ENCODE measurements at regions of chr16 and their contacts with region 1.

Region 1: DNA sequence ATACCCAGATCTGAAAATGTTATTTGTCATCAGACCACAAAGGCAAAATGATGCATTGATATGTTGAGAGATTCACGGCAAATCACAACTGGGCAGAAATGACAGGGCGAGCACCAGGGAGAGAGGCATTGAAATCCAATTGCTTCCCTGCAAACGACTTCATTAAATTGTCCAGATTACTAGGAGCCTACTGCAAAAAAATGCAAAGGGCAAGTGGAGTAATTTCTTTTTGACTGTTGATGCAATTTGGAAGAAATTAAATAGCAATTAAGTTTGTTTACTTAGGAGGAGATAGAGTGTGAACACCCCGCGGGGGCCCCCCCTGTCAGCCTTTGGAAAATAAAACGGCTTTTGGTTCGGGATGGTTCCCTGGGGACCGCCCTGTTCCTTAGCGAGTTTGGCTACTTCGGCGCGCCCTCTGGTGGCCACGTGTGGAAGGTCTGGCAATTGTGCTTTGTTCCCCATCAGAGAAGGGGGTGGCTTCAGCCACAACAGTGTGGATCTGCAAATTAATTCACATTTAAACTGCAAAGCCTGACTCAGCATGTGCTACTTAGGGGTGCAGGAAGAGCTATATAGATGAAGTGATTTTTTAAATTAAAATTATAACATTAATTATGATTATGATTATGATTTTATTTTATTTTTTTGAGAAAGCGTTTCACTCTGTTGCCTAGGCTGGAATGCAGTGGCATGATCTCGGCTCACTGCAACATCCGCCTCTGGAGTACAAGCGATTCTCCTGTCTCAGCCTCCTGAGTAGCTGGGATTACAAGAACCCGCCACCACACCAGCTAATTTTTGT is 14.5 kb upstream of the TMC7 start:
- DNase-seq: peak; percentile 76 to 84
- H3K4me3 ChIP-seq: no peak overlapping the region
- H3K4me3 Mint-ChIP-seq: peak overlapping the region; percentile 34
- H3K27ac Mint-ChIP-seq: no peak overlapping the region
- H3K4me1 ChIP-seq: peaks cover 7% of the 10 kb centered on the region; the same call in 1 of the 2 replicates
- H3K4me1 Mint-ChIP-seq: peaks cover 12% of the 10 kb centered on the region
- H3K27me3 ChIP-seq: no peaks in the 10 kb centered on the region
- H3K27me3 Mint-ChIP-seq: no peaks in the 10 kb centered on the region
- CTCF ChIP-seq: peak; percentile 84 to 90

Region 2: DNA sequence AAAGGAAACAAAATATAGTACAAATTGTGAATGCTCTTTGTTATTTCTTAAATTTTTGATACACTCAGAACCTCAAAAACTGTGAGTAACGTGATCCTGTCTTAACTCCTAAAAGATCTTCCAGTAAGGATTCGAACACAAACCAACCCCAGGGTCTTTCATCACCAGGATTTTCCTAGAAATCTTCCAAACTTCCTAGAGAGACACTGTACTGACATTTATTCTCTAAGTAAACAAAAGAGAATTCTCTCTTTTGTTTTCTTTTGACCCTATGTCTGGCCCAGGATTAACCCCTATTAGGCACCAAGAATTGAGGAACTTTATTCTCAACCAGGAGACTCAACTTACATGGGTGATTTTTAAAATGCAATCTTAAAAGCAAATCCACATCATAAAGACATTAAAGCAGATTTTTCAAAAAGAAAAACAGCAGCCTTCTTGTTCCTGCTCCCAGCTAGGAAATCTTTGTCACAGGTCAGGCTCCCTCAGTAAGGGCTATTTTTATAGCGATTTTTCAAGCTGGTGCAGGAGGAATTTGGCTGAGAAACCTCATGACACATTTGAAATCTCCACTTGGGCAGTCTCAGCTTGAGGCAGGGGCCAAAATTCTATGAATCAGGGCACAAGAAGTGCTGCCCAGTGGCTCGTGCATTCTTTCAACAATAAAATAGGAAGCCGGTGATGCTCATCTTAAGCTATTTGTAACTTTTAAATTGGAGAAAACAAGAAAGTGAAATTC is 36.8 kb before region 1 on chr16:
- CTCF ChIA-PET with region 1: no interaction called
- POLR2A ChIA-PET with region 1: no interaction called
- intact Hi-C with region 1: loop called (anchors 2 kb)
- DNase-seq: no peak
- H3K4me3 ChIP-seq: no peak overlapping the region
- H3K4me3 Mint-ChIP-seq: no peak overlapping the region
- H3K27ac Mint-ChIP-seq: no peak overlapping the region
- H3K4me1 ChIP-seq: peaks cover 7% of the 10 kb centered on the region
- H3K4me1 Mint-ChIP-seq: peaks cover 10% of the 10 kb centered on the region
- H3K27me3 ChIP-seq: no peaks in the 10 kb centered on the region
- H3K27me3 Mint-ChIP-seq: no peaks in the 10 kb centered on the region
- CTCF ChIP-seq: no peak